ENCODE measurements at regions of chr19 and their contacts with region 1.

Region 1: DNA sequence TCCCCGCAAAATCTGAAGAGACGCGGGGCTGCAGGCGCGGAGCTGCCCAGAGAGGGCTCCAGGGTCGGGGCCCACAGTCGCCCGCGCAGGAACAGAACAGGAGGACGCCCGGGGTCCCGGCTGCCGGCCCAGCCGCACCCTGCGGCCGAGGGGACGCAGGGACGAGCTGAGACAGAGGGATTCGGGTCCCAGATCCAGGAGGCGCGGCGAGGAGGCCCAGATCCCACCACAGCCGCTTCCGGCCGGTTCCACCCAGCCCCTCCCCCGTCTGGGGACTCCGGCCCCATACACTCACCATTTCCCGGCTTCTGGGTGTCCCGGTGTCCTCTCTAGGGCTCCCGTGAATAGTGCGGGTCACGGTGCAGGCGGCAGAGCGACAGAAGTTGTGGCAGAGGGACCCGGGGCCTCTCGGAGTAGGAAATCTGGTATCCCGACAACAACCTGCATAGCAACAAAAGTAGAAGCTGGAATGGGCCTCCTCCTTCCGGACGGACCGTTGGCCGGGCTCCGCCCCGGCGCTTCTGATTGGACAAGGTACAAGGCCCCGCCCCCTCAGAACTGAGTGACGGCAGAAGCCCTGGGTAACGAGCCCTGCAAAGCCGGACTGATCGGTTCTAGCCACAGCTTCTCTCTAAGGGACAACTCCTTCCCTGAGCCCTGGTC is at the start of gene ZNF20:
- DNase-seq: peak; percentile 92 to 99 (median 96)

Region 2: DNA sequence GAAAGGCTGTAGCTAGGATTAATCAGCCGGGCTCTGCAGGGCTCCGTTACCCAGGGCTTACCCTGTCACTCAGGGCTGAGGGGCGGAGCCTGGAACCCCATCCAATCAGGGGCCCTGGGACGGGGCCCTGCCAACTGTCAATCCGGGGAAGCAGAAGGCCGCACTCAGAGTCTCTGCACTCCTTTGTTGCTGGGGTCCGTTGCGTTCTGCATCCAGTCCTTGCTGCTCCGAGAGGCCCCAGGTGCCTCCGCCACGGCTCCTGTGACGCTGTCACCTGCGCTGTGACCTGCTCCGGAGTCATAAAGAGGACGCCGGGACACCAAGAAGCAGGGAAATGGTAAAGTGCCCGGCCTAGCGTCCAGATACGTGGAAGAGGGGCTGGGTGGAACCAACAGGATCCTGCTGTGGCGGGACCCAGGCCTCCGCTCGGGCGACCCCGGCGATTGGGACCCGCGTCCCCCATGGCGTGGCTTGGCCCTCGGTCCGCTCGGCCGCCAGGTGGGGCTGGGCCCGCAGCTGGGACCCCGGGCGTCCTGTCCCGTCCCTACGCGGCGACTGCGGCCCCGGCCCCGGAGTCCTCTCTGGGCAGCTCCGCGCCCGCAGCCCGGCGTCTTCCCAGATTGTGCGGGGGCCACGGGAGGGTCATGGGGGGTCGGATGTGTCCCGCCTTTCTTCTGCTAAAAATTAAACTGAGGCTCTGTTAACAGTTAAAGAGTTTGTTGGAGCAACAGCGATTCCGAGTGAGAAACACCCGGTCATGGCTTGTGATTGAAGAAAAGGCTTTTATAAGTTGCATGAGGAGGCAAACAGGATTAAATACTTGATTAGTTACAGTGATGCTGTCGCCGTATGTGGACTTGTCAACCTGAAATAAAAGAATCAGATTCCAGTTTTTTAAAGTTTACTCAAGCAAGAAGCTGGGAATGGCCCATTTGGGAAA is 341.4 kb before region 1 on chr19 and contains the start of gene ZNF491:
- intact Hi-C with region 1: loop called (anchors 5 kb)
- DNase-seq: peak; percentile 84 to 99 (median 94)

Region 3: DNA sequence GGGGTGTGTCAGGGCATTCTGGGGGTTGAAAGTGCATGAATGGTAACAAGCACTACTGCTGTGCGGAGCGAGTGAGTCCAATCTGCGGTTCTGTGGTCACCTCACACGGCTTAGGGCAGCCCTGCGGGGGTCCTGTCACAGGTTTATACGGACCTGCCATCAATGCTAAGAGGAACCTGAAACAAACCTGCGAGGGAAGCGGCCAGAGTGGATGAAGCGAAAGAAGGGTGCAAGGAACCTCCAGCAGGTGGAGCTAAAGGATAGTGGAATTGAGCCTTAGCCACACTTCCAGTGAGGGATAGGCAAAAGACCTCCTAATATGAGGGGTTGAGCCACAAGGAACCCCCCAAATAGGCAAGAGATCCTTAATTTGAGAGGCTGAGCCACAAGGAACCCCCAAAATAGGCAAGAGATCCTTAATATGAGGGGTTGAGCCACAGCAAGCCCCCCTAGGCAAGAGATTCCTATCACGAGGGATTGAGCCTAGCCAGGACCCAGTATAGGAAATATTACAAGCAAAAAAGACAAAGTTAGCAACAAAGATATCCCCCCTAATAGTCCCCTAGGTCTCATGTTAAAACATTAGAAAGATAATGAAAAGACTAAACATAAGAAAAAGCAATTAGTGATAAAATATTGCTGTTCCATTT is 258.7 kb before region 1 on chr19:
- intact Hi-C with region 1: loop called (anchors 5 kb)
- DNase-seq: peak in 5 of 10 donors; percentile 42 to 85 (median 53)

Region 4: DNA sequence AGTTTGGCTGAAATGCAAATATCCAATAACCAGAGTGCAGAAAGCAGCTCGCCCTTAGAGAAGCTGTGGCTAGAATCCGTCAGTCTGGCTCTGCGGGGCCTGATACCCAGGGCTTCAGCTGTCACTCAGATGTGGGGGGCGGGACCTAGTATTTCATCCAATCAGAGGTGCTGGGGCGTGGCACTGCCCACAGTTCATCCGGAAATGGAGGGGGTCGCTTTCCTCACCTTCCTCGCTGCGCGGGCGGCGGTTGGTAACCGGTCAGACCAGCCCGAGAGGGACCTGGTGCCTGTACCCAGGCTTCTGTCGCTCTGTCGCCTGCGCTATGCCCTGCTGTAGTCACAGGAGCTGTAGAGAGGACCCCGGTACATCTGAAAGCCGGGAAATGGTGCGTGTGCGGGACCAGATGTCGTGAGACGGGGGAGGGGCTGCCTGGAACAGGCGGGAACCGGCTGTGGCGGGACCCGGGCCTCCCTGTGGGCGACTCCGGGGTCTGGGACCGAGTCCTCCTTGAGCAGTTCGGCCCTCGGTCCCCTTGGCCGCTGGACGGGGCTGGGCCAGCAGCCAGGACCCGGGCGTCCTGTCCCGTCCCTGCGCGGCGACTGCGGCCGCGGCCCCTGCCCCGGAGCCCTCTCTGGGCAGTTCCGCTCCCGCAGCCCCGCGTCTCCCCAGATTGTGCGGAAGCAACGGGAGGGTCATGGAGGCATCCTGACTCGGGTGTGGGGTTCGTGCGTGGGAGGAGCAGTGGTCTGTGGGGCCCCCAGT is 214.9 kb before region 1 on chr19 and contains the start of gene ZNF700:
- intact Hi-C with region 1: loop called (anchors 2 kb)
- DNase-seq: peak; percentile 89 to 99 (median 96)

Region 5: DNA sequence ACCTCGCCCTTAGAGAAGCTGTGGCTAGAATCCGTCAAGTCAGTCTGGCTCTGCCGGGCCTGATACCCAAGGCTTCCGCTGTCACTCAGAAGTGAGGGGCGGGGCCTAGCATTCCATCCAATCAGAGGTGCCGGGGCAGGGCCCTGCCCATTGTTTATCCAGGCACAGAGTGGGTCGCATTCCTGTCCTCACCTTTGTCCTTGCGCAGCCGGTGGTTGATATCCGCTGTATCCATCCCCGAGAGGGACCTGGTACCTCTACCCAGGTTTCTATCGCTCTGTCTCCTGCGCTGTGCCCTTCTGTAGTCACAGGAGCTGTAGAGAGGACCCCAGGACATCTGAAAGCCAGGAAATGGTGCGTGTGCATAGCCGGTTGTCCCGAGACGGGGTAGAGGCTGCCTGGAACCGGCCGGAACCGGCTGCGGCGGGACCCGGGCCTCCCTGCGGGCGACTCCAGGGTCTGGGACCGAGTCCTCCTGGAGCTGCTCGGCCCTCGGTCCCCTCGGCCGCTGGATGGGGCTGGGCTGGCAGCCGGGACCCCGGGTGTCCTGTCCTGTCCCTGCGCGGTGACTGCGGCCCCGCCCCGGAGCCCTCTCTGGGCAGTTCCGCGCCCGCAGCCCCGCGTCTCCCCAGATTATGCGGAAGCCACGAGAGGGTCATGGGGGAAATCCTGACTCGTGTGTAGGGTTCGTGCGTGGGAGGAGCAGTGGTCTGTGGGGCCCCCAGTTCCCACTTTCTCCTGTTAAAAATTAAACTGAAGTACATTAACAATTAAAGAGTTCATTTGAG is 175.0 kb before region 1 on chr19 and contains the start of gene ZNF763:
- intact Hi-C with region 1: loop called (anchors 1 kb)
- DNase-seq: peak; percentile 80 to 99 (median 94)

Region 6: GRCh38 chr19:12055783-12056182 is 84.2 kb before region 1 on chr19:
- intact Hi-C with region 1: loop called (anchors 1 kb)
- DNase-seq: no peak

Region 7: GRCh38 chr19:12090807-12091206 is 49.2 kb before region 1 on chr19:
- intact Hi-C with region 1: loop called (anchors 2 kb)
- DNase-seq: peak in 8 of 10 donors; percentile 19 to 92 (median 56)

Measured in posterior cingulate gyrus (tissue), 11 donors.